ENCODE measurements at regions of chr11 and their contacts with region 1.

Region 1: DNA sequence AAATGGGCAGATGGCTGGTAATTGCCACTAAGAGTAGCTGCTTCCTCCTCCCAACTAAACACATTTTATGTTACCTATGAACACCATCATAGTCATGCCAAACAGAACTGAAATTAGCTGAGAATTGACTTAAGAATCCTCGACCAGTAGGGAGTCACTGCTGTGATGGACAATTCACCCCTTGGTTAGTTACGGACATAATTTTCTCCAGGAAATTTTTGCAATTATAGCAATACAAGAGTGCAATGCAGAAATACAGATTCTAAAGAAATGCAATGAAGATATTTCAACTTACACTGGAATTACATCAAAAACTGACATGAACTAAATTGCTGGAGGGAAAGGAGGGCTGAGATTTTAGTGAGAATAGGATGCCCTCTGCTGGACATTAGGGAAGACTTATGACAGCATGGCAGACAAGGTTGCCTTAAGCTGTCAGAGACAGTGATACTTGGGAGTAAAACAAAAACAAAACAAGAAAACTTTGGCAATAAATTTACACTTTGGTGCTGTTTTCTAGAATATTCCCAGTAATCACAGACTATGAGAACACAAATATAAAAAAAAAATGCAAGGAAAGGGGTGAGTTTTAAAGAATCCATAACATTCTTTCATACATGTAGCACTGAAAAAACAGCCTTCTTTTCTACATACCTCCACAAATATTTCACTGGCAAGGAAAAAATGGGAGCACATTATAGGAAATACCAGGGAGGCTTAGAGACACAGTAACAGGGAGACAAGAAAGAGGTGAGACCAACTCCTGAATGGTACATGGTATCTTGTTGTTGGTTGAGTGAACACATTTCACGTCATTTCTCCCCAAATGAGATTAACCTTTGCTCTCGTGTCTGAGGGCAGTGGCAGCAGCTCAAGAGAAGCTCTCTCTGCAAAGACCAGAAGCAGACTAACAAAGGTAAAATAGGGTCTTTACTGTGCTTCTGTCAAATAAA is 11.2 kb upstream of the PPP2R1B start:
- DNase-seq: peak in 1 of 2 donors; percentile 49
- H3K4me3 ChIP-seq: no peak overlapping the region
- H3K27ac ChIP-seq: no peak overlapping the region
- H3K4me1 ChIP-seq: peaks cover 0 to 6% of the 10 kb centered on the region in 2 donors
- H3K27me3 ChIP-seq: no peaks in the 10 kb centered on the region
- CTCF ChIP-seq: peak; percentile 76 to 93 (median 86)
- POLR2A ChIP-seq: no peak

Region 2: GRCh38 chr11:111589886-111590499 is 187.4 kb before region 1 on chr11:
- intact Hi-C with region 1: loop called (anchors 5 kb)
- DNase-seq: no peak
- H3K4me3 ChIP-seq: no peak overlapping the region
- H3K27ac ChIP-seq: no peak overlapping the region
- H3K4me1 ChIP-seq: no peaks in the 10 kb centered on the region
- H3K27me3 ChIP-seq: no peaks in the 10 kb centered on the region
- CTCF ChIP-seq: no peak
- POLR2A ChIP-seq: no peak

Region 3: GRCh38 chr11:111718436-111718835 is 58.9 kb before region 1 on chr11:
- intact Hi-C with region 1: no loop called
- DNase-seq: no peak
- H3K4me3 ChIP-seq: no peak overlapping the region
- H3K27ac ChIP-seq: peak overlapping the region; percentile 43 to 51
- H3K4me1 ChIP-seq: no peaks in the 10 kb centered on the region
- H3K27me3 ChIP-seq: no peaks in the 10 kb centered on the region
- CTCF ChIP-seq: no peak
- POLR2A ChIP-seq: peak in 1 of 2 donors; percentile 15